Cardiac septum (tissue), 1 donor: ENCODE measurements at regions of chr3 and their contacts with region 1.

Region 1: DNA sequence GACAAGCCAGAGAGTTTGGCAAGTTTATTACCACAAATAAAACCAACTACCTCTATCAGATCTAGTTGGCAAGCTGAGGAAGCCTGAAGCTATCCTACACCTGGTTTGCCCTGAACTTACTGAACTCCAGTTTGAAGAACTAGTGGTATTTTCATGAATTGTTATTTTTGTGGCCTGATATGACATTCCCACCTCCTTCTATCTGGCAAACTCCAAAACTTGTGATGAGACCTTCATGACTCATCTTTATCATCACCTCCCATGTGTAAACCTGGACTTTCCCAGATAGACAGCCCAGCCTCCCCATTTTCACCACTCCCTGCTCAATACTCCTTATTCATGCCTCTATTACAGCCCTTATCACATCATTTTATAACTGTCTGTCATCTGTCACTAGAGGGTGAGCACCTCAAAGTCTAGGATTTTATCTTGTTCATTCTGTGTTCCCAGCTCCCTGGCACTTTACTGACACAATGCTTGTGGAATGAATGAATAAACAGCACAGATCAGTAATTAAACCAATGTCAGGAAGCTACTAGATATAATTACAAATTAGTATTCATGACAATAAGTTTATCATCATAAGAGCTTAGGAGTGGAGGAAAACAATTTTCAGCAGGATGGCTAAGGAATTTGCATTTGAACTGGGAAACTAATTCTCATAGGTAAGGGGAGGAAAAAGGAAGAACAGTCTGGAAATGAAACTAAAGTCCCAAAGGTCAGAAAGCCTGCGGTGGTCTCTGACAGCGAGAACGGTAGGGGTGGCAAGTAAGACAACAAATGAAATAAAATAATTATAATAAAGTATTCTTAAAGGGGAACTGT is 13.2 kb upstream of the TRANK1 start:
- DNase-seq: no peak

Region 2: GRCh38 chr3:36729204-36730056 is 228.6 kb before region 1 on chr3:
- intact Hi-C with region 1: loop called (anchors 2 kb)
- DNase-seq: no peak

Region 3: GRCh38 chr3:36907911-36908646 is 50.0 kb before region 1 on chr3:
- intact Hi-C with region 1: loop called (anchors 2 kb)
- DNase-seq: peak; percentile 86